CD4-positive, alpha-beta memory T cell (primary cell): ENCODE measurements at regions of chr14 and their contacts with region 1.

Region 1: DNA sequence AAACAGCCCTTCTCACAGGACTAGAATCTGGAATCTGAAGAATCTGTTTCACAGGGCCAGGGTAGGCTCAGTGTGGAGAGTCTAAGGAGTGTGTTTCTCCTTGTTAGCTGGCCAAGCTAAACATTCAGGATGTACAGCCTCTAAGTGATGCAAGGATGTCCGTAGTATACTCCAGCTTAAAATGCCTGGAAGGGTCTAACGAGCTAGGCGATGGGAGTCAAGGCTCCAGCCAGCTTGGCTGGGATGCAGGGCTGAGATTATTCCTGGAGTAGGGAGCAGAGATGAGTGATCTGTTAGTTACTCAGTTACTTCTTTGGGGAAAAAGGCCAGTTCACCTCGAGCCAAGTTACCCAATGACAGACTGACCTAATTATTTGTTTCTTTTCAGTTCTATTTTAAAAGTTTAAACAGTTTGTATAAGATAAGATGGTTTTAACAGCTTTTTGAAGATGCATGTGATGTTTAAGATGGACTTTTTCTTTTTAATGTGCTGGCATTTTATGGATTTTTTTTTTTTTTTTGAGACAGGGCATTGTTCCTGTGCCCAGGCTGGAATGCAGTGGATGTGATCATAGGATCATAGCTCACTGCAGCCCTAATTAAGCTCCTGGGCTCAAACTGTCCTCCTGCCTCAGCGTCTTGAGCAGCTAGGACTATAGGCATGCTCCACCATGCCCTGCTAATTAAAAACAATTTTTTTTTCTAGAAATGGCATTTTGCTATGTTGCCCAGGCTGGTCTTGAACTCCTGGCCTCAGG is 41.1 kb downstream of the SYNE2 start:
- DNase-seq: no peak
- H3K4me3 ChIP-seq: no peak overlapping the region
- H3K4me3 Mint-ChIP-seq: no peak overlapping the region
- H3K27ac ChIP-seq: no peak overlapping the region
- H3K27ac Mint-ChIP-seq: peak overlapping the region in 6 of 7 donors; percentile 39 to 78 (median 65)
- H3K4me1 ChIP-seq: peaks cover 28% of the 10 kb centered on the region
- H3K4me1 Mint-ChIP-seq: peaks cover 28 to 69% (median 52%) of the 10 kb centered on the region in 4 donors
- H3K27me3 ChIP-seq: no peaks in the 10 kb centered on the region
- H3K27me3 Mint-ChIP-seq: no peaks in the 10 kb centered on the region

Region 2: DNA sequence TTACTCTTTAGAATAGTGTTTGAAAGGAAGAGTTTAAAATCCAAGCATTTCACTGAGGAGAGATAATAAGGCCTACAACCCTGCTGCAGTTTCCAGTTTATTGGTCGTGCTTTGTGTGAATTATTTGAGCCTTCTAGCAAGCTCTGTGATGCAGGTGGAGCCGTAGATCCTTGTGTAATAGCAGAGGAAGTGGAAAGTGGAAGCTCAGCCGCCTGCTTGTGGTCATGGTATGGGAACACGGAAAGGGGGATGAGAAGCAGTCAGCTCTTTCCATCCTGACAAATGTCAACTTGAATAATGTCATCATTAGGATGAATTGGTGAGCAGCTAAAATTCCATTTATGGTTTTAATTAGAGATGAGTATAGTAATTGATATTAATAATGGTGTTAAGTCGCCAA is 12.0 kb before region 1 on chr14:
- CTCF ChIA-PET with region 1: no interaction called
- POLR2A ChIA-PET with region 1: no interaction called
- intact Hi-C with region 1: no loop called
- DNase-seq: no peak
- H3K4me3 ChIP-seq: no peak overlapping the region
- H3K4me3 Mint-ChIP-seq: no peak overlapping the region
- H3K27ac ChIP-seq: no peak overlapping the region
- H3K27ac Mint-ChIP-seq: peak overlapping the region in 2 of 7 donors; percentile 8 to 55
- H3K4me1 ChIP-seq: peaks cover 10% of the 10 kb centered on the region
- H3K4me1 Mint-ChIP-seq: peaks cover 29 to 66% (median 44%) of the 10 kb centered on the region in 4 donors
- H3K27me3 ChIP-seq: no peaks in the 10 kb centered on the region
- H3K27me3 Mint-ChIP-seq: no peaks in the 10 kb centered on the region

Region 3: DNA sequence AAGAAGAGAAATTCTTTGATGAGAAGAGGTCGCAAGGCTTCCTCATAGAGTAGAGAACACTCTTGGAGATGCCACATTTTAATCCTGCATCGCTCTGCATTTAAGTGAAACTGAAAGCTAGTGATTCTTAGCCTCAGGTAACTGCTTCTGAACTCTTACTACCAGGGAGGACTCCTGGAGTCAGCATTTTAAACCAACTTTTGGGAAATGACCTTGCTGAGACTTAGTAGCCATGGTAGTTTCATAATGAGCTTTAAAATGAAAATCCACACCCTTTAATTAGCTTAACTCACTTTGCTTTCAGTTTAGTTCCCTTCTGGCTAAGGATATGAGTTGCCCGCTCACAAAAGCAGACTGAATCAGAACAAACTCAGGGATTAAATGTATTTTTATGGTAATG is 39.2 kb after region 1 on chr14:
- CTCF ChIA-PET with region 1: no interaction called
- POLR2A ChIA-PET with region 1: no interaction called
- intact Hi-C with region 1: loop called (anchors 5 kb)
- DNase-seq: peak in 3 of 5 donors; percentile 5 to 18 (median 17)
- H3K4me3 ChIP-seq: peak overlapping the region in 1 of 2 donors; percentile 3
- H3K4me3 Mint-ChIP-seq: peak overlapping the region; percentile 7 to 79 (median 70)
- H3K27ac ChIP-seq: peak overlapping the region; percentile 14
- H3K27ac Mint-ChIP-seq: peak overlapping the region; percentile 17 to 84 (median 66)
- H3K4me1 ChIP-seq: peaks cover 56% of the 10 kb centered on the region
- H3K4me1 Mint-ChIP-seq: peaks cover 25 to 48% (median 33%) of the 10 kb centered on the region in 4 donors
- H3K27me3 ChIP-seq: no peaks in the 10 kb centered on the region
- H3K27me3 Mint-ChIP-seq: no peaks in the 10 kb centered on the region